ENCODE measurements at regions of chr1 and their contacts with region 1.

Region 1: DNA sequence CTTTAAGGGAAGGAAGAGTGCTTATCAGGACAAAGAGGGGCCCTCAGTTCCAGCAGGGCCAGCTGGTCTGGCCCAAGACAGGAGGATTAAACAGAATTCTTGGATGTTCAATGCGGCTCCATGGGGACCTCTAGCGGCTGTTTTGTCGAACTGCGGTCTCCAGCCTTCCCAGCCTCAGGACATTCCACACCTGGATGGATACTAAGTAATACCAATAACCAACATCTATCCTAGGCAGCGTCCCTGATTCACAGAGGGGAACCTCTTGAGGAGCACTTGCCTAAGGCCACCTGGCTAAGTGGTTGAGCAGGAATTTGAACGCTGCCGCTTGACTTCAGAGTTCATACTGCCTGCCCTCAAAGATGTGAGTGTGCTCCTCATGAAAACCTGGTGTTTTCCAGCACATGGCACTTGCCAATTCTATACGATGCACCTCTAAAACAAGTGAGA is 15.5 kb upstream of the CD247 start:
- DNase-seq: peak; percentile 81
- CTCF ChIP-seq: peak; percentile 89

Region 2: GRCh38 chr1:167059045-167059808 is 474.6 kb before region 1 on chr1:
- CTCF ChIA-PET with region 1: interaction called, 13 read pairs
- POLR2A ChIA-PET with region 1: no interaction called
- DNase-seq: peak; percentile 64
- CTCF ChIP-seq: peak; percentile 91

Region 3: GRCh38 chr1:167373398-167373797 is 160.5 kb before region 1 on chr1:
- CTCF ChIA-PET with region 1: interaction called, 10 read pairs
- POLR2A ChIA-PET with region 1: no interaction called
- DNase-seq: no peak
- CTCF ChIP-seq: no peak

Region 4: GRCh38 chr1:167442124-167442848 is 91.6 kb before region 1 on chr1:
- CTCF ChIA-PET with region 1: interaction called, 12 read pairs
- POLR2A ChIA-PET with region 1: no interaction called
- DNase-seq: peak; percentile 89
- CTCF ChIP-seq: peak; percentile 95

Region 5: DNA sequence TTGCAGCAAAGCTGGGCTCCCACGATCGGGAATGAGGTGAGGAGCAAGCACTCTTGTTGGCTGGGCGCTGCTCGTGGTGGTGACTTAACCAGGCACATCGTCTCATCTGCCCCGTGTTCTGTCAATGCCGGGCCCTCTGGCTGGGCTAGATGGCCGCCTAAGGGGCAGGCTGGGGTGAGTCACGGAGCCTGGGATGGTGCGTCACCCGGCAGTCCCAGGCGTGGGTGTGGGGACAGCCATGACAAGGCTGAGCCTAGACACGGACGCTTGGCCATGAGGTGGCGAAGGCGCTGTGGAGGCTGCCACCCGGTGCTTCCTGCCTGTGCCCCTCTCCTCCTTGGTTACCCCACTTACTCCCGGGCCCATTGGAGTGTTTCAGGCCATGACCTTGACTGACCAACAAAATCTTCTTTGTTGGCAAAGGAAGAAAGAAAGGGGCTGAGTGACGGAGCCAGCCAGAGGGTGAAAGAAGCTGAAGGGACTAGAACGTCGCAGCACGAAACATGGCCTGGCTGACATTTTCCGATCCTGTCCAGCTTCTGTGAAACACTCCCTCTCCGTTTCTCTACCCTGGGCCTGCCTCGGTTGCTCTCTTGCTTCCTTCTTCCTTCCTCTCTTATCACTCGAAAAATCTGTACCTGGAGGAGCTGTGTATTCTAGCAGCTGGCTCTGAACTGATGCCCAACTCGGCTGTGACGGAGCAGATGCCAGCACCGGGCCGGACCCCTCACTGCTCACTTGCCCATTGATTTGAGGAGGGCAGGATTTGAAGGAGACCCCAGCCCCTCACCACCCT is 16.1 kb before region 1 on chr1:
- CTCF ChIA-PET with region 1: interaction called, 19 read pairs
- POLR2A ChIA-PET with region 1: no interaction called
- DNase-seq: no peak
- CTCF ChIP-seq: no peak

Region 6: DNA sequence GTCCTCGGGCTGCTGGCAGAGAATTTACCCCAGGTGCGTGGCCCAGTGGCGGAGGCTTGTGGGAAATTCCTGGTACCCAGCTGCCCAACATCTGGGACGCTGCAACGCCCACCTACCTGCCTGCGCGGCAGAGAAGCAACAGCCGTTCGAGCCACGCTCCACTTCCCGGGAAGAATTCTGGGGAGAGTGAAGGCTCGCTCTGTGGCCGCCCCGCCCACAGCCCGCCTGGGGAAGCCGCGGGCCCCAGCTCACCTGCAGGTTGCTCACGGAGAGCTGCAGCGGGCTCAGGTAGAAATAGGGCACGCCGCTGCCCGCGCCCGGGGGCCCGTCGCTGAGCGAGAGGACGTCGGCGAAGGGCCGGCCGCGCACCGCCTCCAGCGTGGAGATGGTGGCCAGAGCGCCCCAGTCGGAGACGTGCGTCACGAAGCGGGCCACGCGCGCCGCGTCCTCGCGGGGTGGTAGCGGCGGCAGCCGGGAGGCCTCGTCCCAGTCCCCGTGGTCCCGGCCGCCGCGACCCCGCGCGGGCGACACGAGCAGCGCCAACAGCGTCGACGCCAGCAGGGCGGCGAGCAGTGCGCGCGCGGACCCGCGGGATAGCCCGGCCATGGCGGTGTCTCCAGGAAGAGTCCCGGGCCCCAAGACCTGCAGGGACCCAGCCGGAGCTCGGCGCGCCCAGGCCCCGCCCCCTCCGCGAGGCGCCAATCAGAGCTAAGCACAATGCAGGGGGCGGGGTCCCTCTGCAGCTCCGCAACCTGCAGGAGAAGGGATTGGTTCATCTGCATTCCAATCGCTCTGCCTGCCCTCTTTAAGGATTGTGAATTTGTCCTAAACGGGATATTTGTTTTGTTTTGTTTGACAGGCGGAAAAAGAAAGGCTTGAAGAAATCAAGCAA is 19.5 kb after region 1 on chr1 and contains the start of gene CREG1:
- CTCF ChIA-PET with region 1: interaction called, 19 read pairs
- POLR2A ChIA-PET with region 1: no interaction called
- DNase-seq: peak; percentile 95
- CTCF ChIP-seq: no peak

Measured in GM10248 (cell line).